Panc1 (cell line): ENCODE measurements at regions of chr4 and their contacts with region 1.

Region 1: GRCh38 chr4:25487155-25487554 is 110.1 kb downstream of the ANAPC4 start:
- DNase-seq: no peak
- ATAC-seq: no peak
- H3K4me3 ChIP-seq: no peak overlapping the region
- H3K27ac ChIP-seq: no peak overlapping the region
- H3K4me1 ChIP-seq: no peaks in the 10 kb centered on the region
- H3K27me3 ChIP-seq: no peaks in the 10 kb centered on the region
- CTCF ChIP-seq: no peak

Region 2: DNA sequence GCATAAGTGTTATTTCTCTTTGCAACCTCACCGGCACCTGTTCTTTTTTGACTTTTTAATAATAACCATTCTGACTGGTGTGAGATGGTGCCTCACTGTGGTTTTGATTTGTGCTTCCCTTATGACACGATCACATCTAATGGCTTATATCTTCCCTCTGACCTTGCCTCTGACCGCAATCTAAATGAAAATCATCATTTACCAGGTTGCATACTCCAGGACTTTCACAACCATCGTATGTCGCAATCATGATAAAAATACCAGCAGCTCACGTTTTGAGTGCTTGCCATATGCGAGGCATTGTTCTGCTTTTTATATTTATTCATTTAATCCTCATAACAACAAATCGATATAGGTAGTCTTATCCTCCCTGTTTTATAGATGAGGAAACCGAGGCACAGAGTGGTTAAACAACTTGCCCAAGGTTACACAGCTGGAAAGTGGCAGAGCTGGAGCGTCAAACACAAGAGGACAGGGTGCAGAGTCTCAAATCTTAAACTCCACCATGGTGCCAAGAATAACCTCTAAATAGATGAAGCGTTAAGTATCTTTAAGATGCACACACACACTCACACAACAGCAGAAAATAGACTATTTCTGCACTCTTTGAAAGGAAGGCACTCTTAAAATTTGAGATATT is 273.5 kb after region 1 on chr4:
- CTCF ChIA-PET with region 1: no interaction called
- POLR2A ChIA-PET with region 1: interaction called, 16 read pairs
- in situ Hi-C with region 1: no loop called
- intact Hi-C with region 1: no loop called
- DNase-seq: no peak
- ATAC-seq: no peak
- H3K4me3 ChIP-seq: no peak overlapping the region
- H3K27ac ChIP-seq: no peak overlapping the region
- H3K4me1 ChIP-seq: no peaks in the 10 kb centered on the region
- H3K27me3 ChIP-seq: no peaks in the 10 kb centered on the region
- CTCF ChIP-seq: no peak